Activated CD4-positive, alpha-beta memory T cell treated with anti-CD3 and anti-CD28 coated beads for 36 hours (primary cell): ENCODE measurements at regions of chr17 and their contacts with region 1.

Region 1: GRCh38 chr17:31373150-31374093 is 18.1 kb upstream of the RAB11FIP4 start:
- DNase-seq: no peak
- H3K4me3 Mint-ChIP-seq: no peak overlapping the region
- H3K27ac Mint-ChIP-seq: no peak overlapping the region
- H3K4me1 Mint-ChIP-seq: peaks cover 26% of the 10 kb centered on the region
- H3K27me3 Mint-ChIP-seq: no peaks in the 10 kb centered on the region

Region 2: GRCh38 chr17:31015639-31016038 is 357.8 kb before region 1 on chr17:
- CTCF ChIA-PET with region 1: interaction called, 3 read pairs
- POLR2A ChIA-PET with region 1: no interaction called
- intact Hi-C with region 1: loop called (anchors 2 kb)
- DNase-seq: no peak
- H3K4me3 Mint-ChIP-seq: no peak overlapping the region
- H3K27ac Mint-ChIP-seq: no peak overlapping the region
- H3K4me1 Mint-ChIP-seq: no peaks in the 10 kb centered on the region
- H3K27me3 Mint-ChIP-seq: no peaks in the 10 kb centered on the region

Region 3: GRCh38 chr17:31216053-31216751 is 157.2 kb before region 1 on chr17:
- CTCF ChIA-PET with region 1: interaction called, 26 read pairs
- POLR2A ChIA-PET with region 1: no interaction called
- intact Hi-C with region 1: loop called (anchors 2 kb)
- DNase-seq: no peak
- H3K4me3 Mint-ChIP-seq: no peak overlapping the region
- H3K27ac Mint-ChIP-seq: no peak overlapping the region
- H3K4me1 Mint-ChIP-seq: no peaks in the 10 kb centered on the region
- H3K27me3 Mint-ChIP-seq: no peaks in the 10 kb centered on the region

Region 4: GRCh38 chr17:31266042-31266441 is 107.4 kb before region 1 on chr17:
- CTCF ChIA-PET with region 1: interaction called, 7 read pairs
- POLR2A ChIA-PET with region 1: interaction called, 3 read pairs
- intact Hi-C with region 1: loop called (anchors 2 kb)
- DNase-seq: no peak
- H3K4me3 Mint-ChIP-seq: no peak overlapping the region
- H3K27ac Mint-ChIP-seq: no peak overlapping the region
- H3K4me1 Mint-ChIP-seq: no peaks in the 10 kb centered on the region
- H3K27me3 Mint-ChIP-seq: no peaks in the 10 kb centered on the region

Region 5: DNA sequence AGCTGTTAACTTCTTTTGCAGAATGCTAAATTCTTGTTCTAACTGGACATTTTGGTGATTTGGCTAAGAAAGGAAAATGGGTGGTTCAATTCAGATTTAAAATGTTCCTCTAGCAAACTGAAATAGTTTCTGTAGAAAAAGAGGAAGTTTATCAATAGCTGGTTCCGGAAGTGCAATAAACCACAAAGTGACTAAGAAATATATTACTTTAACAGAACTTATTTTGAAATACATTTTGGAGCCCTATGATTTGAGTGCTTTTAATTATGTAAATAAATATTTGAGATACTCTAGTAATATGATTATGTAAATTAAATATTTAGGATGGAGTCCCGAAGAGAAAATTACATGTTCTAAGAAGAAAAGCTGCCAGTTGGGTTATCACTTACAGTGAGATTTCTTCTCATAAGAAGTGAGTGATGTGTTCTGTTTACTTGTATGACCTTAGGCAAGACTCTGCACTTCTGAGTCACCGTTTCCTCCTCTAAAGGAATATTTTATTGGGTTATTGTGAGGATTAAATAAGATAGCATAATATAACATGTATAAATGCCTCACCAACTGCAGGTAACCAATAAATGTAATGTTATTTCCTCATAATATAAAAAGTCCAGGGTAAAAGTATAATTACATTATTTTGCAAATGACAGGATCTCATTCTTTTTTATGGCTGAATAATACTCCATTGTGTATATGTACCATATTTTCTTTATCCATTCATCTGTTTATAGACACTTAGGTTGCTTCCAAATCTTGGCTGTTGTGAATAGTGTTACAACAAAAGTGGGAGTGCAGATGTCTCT is 59.2 kb before region 1 on chr17 and contains the start of gene EVI2B:
- CTCF ChIA-PET with region 1: interaction called, 5 read pairs
- POLR2A ChIA-PET with region 1: no interaction called
- intact Hi-C with region 1: loop called (anchors 2 kb)
- DNase-seq: no peak
- H3K4me3 Mint-ChIP-seq: peak within 1 kb of the TSS; percentile 84
- H3K27ac Mint-ChIP-seq: peak within 1 kb of the TSS; percentile 94
- H3K4me1 Mint-ChIP-seq: peaks cover 48% of the 10 kb centered on the region
- H3K27me3 Mint-ChIP-seq: no peaks in the 10 kb centered on the region
- total RNA-seq, gene EVI2B: 14.1 to 15.9 TPM

Region 6: GRCh38 chr17:31398381-31399311 is 25.2 kb after region 1 on chr17:
- CTCF ChIA-PET with region 1: no interaction called
- POLR2A ChIA-PET with region 1: no interaction called
- intact Hi-C with region 1: no loop called
- DNase-seq: peak; percentile 3
- H3K4me3 Mint-ChIP-seq: no peak overlapping the region
- H3K27ac Mint-ChIP-seq: no peak overlapping the region
- H3K4me1 Mint-ChIP-seq: no peaks in the 10 kb centered on the region
- H3K27me3 Mint-ChIP-seq: peaks cover 14% of the 10 kb centered on the region